ENCODE measurements at regions of chr3 and their contacts with region 1.

Region 1: GRCh38 chr3:195556387-195556786 is 13.3 kb upstream of the PPP1R2 start:
- DNase-seq: no peak
- H3K4me3 Mint-ChIP-seq: no peak overlapping the region
- H3K27ac Mint-ChIP-seq: no peak overlapping the region
- H3K4me1 Mint-ChIP-seq: peaks cover 23% of the 10 kb centered on the region
- H3K27me3 Mint-ChIP-seq: no peaks in the 10 kb centered on the region

Region 2: GRCh38 chr3:195566814-195567213 is 10.4 kb after region 1 on chr3:
- CTCF ChIA-PET with region 1: interaction called, 15 read pairs
- POLR2A ChIA-PET with region 1: no interaction called
- DNase-seq: no peak
- H3K4me3 Mint-ChIP-seq: no peak overlapping the region
- H3K27ac Mint-ChIP-seq: no peak overlapping the region
- H3K4me1 Mint-ChIP-seq: no peaks in the 10 kb centered on the region
- H3K27me3 Mint-ChIP-seq: peaks cover 5% of the 10 kb centered on the region

Measured in activated CD4-positive, alpha-beta memory T cell treated with anti-CD3 and anti-CD28 coated beads, Interleukin-2, amount 10 ng/mL, durations not matched to agents 7 days and 5 days (primary cell).